ENCODE measurements at regions of chr14 and their contacts with region 1.

Region 1: DNA sequence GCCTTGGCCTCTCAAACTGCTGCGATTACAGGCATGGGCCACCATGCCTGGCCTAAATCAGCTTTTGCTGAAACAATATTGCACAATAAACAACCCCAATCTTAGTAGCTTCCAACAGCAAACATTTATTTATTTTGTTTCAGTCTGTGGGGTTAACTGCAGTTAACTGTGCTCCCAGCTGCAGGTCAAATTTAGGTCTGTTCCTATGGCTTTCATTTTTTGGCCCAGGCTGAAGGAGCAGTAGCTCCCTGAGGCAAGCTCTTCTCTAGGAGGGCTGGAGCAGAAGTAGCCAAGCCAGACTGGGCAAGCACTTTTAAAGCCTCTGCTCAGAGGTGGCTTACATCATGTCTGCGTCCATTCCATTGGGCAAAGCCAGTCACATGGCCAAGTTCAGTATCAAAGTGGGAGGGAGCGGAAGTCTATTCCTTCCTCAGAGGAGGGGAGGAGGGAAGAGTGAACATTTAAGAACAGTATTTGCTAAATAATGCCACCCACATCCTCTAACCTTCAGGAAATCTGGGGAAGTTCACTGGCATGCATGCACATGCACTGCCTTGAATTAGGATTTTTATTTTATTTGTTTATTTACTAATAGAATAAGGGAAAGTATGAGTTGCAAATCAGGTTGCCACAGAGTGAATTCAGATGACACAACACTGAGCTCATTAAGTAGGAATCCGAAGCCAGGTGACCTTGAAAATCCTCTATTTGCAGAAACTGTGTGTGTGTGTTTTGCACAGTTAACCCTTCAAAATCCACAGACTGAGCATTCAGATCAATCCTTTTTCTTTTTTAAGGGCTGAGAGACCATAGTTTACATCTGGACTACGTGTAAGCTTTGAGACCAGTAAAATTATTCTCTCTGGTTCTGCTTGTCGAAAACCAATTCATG is 122.0 kb upstream of the SEL1L start:
- DNase-seq: no peak
- H3K4me3 ChIP-seq: no peak overlapping the region
- H3K27ac ChIP-seq: no peak overlapping the region
- H3K4me1 ChIP-seq: peaks cover 0 to 13% (median 3%) of the 10 kb centered on the region in 4 experiments; a peak in 2 of 7 replicates
- H3K27me3 ChIP-seq: no peaks in the 10 kb centered on the region; a peak in 1 of 7 replicates
- CTCF ChIP-seq: no peak
- EP300 ChIP-seq: no peak
- POLR2A ChIP-seq: no peak
- RAD21 ChIP-seq: no peak

Region 2: GRCh38 chr14:81669308-81669707 is 13.6 kb after region 1 on chr14:
- CTCF ChIA-PET with region 1: interaction called, 12 read pairs
- POLR2A ChIA-PET with region 1: no interaction called
- DNase-seq: no peak
- H3K4me3 ChIP-seq: no peak overlapping the region
- H3K27ac ChIP-seq: no peak overlapping the region
- H3K4me1 ChIP-seq: no peaks in the 10 kb centered on the region
- H3K27me3 ChIP-seq: no peaks in the 10 kb centered on the region
- CTCF ChIP-seq: no peak
- EP300 ChIP-seq: no peak
- POLR2A ChIP-seq: no peak
- RAD21 ChIP-seq: no peak